H1 (cell line): ENCODE measurements at regions of chr2 and their contacts with region 1.

Region 1: DNA sequence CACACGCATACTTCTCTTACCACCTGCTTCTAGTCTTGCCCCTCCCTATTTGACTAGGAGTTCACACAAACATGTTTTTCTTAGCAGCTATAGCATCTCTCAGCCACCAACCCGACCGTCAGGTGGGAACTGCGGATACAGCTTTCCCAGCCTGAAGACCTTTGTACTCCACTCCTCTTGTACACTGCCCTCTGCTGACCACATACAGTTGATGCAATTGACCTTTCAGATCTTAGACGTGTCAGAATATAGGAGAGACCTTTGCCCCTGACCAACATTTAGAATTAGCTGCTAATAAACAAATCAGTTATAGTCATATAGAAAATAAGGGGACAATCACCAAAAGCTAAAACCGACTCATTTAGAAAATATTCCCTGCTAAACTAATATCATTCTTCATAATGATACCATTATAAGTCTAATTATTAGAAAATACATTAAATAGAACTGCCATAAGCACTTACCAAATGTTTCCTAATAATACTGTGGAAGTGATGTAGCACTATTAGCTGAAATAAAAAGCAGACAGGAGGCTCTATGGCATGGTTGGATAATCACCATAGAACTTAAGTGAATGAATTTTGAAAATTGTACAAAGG is 208.4 kb downstream of the RAD51AP2 start:
- DNase-seq: peak in 1 of 2 experiments; percentile 25
- H3K4me3 ChIP-seq: no peak overlapping the region
- H3K27ac ChIP-seq: no peak overlapping the region
- H3K4me1 ChIP-seq: peaks cover 0 to 3% (median 1%) of the 10 kb centered on the region in 4 experiments; a peak in 3 of 7 replicates
- H3K27me3 ChIP-seq: no peaks in the 10 kb centered on the region
- CTCF ChIP-seq: peak; percentile 43 to 89 (median 71)
- EP300 ChIP-seq: no peak
- POLR2A ChIP-seq: no peak
- RAD21 ChIP-seq: peak; percentile 88 to 89

Region 2: DNA sequence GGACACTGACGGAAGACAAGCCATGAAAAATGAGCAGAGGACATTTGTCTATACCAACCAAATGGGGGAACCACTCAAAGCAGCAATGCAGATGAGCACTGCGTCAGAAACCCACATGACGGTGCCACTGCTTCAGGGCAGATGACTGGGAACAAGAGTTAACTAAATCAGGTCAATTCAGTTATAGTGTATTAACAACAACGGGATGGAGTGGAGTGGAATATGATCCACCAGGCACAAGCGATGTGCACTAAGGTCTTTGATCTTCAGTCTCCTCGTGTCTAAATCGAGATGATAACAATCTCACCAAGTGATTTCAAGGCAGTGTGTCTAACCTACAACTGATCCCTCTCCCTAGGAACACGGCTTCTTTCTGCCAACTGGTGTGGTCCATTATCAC is 60.6 kb before region 1 on chr2:
- CTCF ChIA-PET with region 1: interaction called, 11 read pairs
- POLR2A ChIA-PET with region 1: no interaction called
- DNase-seq: no peak
- H3K4me3 ChIP-seq: no peak overlapping the region
- H3K27ac ChIP-seq: no peak overlapping the region
- H3K4me1 ChIP-seq: peaks cover 0 to 4% (median 0%) of the 10 kb centered on the region in 4 experiments; a peak in 2 of 7 replicates
- H3K27me3 ChIP-seq: no peaks in the 10 kb centered on the region
- CTCF ChIP-seq: no peak
- EP300 ChIP-seq: no peak
- POLR2A ChIP-seq: no peak
- RAD21 ChIP-seq: no peak

Region 3: DNA sequence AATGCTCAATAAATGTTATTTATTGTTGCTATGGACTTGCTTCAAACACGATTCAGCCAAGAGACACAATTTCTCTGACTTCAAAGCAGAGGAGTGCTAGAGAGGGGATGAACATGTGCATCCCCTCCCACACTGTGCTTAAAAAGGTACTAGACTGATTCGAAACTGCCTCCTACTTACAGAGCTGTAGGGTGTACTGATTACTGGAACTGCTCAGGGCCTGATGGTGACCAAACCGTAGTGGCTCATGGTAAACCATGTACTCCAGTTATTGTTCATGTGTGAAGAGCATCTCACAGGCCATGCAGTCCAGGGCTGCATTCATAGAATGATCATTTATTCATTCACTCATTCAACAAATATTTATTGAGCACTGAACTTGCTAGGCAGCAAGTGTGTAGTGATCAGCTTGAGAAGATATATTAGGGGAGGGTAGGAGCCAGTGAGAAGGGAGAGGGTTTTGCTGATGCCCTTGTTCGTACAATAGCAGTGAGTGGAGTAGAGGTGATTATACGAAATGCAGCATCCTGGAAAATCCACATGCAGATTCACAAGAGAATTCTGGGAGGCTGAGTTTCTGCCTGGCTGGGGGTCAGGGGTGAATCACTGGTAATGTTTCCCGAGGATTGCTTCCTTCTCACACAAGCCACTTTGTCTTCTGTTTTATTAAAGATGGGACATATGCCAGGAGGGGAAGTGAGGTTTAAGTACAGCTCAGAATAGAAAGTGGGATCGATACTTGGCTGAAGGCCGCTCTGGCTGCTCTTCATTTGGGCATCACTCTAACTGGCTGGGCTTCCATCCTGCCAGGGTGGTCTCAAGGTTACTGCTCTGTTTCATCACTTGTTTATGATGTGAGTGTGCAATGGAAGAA is 37.0 kb before region 1 on chr2:
- CTCF ChIA-PET with region 1: interaction called, 14 read pairs
- POLR2A ChIA-PET with region 1: no interaction called
- DNase-seq: no peak
- H3K4me3 ChIP-seq: no peak overlapping the region
- H3K27ac ChIP-seq: no peak overlapping the region
- H3K4me1 ChIP-seq: no peaks in the 10 kb centered on the region
- H3K27me3 ChIP-seq: no peaks in the 10 kb centered on the region
- CTCF ChIP-seq: no peak
- EP300 ChIP-seq: no peak
- POLR2A ChIP-seq: no peak
- RAD21 ChIP-seq: no peak

Region 4: DNA sequence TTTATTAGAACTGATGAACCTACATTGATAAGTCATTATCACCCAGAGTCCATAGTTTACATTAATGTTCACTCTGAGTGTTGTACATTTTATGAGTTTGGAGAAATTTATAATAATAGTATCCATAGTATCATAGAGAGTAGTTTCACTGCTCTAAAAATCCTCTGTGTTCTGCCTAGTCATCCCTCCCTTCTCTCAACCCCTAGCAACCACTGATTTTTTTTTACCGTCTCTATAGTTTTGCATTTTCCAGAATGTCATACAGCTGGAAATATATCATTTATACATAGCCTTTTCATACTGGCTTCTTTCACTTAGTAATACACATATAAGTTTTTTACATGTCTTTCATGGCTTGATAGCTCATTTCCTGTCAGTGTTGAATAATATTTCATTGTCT is 22.7 kb before region 1 on chr2:
- CTCF ChIA-PET with region 1: interaction called, 10 read pairs
- POLR2A ChIA-PET with region 1: no interaction called
- DNase-seq: no peak
- H3K4me3 ChIP-seq: no peak overlapping the region
- H3K27ac ChIP-seq: no peak overlapping the region
- H3K4me1 ChIP-seq: peaks cover 0 to 3% (median 0%) of the 10 kb centered on the region in 4 experiments; a peak in 1 of 7 replicates
- H3K27me3 ChIP-seq: no peaks in the 10 kb centered on the region
- CTCF ChIP-seq: no peak
- EP300 ChIP-seq: no peak
- POLR2A ChIP-seq: no peak
- RAD21 ChIP-seq: no peak

Region 5: DNA sequence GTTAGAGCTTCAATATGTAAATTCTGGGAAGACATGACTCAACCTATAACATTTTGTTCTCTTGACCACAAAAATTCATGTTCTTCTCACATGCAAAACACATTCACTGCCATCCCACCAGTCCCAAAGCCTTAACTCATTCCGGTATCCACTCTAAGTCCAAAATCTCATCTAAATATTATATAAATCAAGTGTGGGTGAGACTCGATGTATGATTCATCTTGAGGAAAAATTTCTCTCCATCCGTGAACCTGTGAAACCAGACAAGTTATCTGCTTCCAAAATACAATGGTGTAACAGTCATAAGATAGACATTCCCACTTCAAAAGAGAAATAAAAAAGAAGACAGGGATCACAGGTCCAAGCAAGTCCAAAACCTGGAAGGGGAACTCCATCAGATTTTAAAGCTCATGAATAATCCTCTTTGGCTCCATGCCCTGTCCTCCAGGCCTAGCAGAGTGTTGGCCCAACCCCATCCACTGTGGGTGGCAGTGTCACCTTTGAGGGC is 107.1 kb after region 1 on chr2:
- CTCF ChIA-PET with region 1: no interaction called
- POLR2A ChIA-PET with region 1: no interaction called
- DNase-seq: no peak
- H3K4me3 ChIP-seq: no peak overlapping the region
- H3K27ac ChIP-seq: no peak overlapping the region
- H3K4me1 ChIP-seq: no peaks in the 10 kb centered on the region
- H3K27me3 ChIP-seq: no peaks in the 10 kb centered on the region
- CTCF ChIP-seq: no peak
- EP300 ChIP-seq: no peak
- POLR2A ChIP-seq: no peak
- RAD21 ChIP-seq: no peak

Region 6: DNA sequence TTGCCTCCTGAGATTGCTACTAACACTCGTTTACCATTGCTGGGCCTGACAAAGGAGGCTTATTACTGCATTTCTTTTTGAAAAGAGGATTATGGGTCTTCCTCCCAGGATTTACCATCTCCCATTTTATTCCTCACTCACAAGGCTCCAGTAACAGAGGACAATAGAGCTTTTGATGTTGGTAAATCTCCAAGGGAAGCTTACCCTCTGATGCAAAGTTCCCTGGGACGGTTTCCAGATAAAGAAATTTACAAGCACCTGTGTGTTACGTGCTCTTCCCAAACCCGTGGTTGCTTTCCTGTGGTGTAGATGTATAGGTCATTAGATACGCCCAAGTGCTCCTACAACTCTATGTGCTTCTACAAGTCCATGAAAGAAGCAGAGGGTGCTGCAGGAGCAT is 247.8 kb after region 1 on chr2:
- CTCF ChIA-PET with region 1: no interaction called
- POLR2A ChIA-PET with region 1: no interaction called
- DNase-seq: no peak
- H3K4me3 ChIP-seq: peak overlapping the region in 1 of 4 experiments; percentile 7; a peak in 1 of 8 replicates
- H3K27ac ChIP-seq: peak overlapping the region; percentile 20; the same call in 1 of the 2 replicates
- H3K4me1 ChIP-seq: peaks cover 4 to 17% (median 8%) of the 10 kb centered on the region in 4 experiments; a peak in 5 of 7 replicates
- H3K27me3 ChIP-seq: no peaks in the 10 kb centered on the region
- CTCF ChIP-seq: no peak
- EP300 ChIP-seq: no peak
- POLR2A ChIP-seq: no peak
- RAD21 ChIP-seq: no peak